ENCODE measurements at regions of chr1 and their contacts with region 1.

Region 1: DNA sequence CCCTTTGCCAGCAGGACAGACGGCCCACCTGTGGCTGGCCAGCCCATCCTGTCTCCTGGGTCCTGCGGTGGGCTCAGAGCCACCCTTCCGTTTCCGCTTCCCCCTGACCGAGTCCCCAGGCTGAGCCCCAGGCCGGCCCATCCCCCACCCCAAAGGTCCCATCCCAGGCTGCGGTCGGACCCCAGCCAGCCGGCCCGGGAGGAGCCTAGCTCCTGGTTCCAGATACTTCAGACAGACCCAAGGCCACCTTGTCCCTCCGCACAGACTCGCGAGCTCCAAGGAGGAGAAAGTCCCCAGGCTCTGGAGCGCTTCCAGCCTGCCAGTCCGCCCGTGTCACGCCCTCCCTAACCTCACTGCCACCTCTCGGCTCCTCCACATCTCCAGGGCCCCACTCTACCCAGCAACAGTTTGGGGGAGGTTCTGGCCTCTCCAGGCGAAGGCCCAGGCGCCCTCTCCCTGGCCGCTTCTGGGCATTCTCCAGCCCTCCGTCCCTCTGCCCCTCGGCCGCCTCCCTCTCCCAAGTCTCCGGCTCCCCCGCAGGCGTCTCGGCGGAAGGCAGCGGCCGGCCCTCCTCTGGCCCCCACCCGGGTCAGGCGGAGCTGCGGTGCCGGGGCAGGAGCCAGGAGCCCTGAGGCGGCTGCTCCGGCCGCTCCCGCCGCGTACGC is 835 bp downstream of the LRRN2 start:
- DNase-seq: peak in 2 of 10 donors; percentile 79 to 90

Region 2: GRCh38 chr1:204384994-204385352 is 299.7 kb before region 1 on chr1:
- intact Hi-C with region 1: no loop called
- DNase-seq: peak in 8 of 10 donors; percentile 52 to 93 (median 65)

Region 3: GRCh38 chr1:204633665-204634064 is 51.0 kb before region 1 on chr1:
- intact Hi-C with region 1: loop called (anchors 5 kb)
- DNase-seq: peak in 2 of 10 donors; percentile 52 to 79